Activated CD4-positive, alpha-beta memory T cell treated with anti-CD3 and anti-CD28 coated beads for 36 hours (primary cell): ENCODE measurements at regions of chr3 and their contacts with region 1.

Region 1: DNA sequence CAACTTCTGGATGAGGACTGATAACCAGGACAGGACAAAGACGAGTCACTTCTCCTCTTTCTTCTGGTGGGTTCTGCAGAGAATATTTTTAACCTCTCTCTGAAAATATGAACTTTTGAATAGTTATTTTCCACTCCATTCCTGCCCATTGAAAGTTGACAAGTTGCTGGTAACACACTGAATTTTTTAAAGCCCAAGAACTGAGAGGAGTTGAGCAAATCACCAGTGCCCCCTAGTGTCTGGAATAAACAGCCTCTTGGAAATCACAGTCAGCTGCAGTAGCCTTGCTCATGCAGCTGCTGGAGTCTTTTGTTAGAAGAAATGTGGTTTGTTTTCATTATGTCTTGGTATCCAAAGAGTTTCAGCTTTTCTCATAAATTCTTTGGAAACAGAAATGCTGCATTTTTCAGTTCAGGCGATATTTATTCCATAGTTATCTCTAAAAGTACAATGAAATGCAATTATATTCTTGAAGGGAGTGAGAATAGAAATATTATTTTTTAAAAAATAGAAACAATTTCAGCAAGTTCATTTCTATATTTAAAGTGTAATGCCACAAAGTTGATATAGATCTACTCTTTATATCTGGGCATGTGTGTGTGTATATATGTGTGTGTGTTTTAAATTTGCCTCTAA is 741.0 kb upstream of the CBLB start:
- DNase-seq: peak; percentile 76
- H3K4me3 Mint-ChIP-seq: no peak overlapping the region
- H3K27ac Mint-ChIP-seq: peak overlapping the region; percentile 67
- H3K4me1 Mint-ChIP-seq: peaks cover 23% of the 10 kb centered on the region
- H3K27me3 Mint-ChIP-seq: no peaks in the 10 kb centered on the region

Region 2: DNA sequence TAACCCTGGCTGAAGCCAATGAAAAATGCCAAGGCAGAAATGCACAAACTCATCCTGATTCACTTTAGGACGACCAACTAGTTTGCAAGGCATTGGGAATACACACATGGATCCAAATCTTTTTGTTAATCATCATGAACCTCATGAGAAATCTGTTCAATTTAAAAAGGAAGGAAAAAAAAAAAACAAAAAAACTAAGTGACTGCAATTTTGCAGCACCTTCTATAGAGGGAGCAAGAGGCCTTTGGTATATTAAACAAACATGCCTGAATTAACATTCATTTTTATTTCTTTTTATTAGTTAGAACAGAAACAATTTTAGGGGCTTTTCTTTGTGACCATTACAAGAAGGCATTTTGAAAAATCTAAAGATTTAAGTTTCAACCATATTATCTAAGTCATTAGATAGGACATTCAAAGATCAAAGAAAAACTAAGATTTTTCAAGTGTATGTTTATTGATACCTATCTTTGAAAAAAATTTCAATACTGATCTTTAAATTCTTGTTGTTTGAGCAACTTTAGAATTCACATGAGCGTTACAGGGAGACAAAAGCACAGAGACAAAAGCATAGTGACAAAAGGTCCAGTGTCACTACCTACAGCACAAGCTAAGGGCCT is 923.4 kb before region 1 on chr3:
- CTCF ChIA-PET with region 1: interaction called, 12 read pairs
- POLR2A ChIA-PET with region 1: no interaction called
- intact Hi-C with region 1: loop called (anchors 1 kb)
- DNase-seq: no peak
- H3K4me3 Mint-ChIP-seq: no peak overlapping the region
- H3K27ac Mint-ChIP-seq: peak overlapping the region; percentile 23
- H3K4me1 Mint-ChIP-seq: peaks cover 24% of the 10 kb centered on the region
- H3K27me3 Mint-ChIP-seq: no peaks in the 10 kb centered on the region

Region 3: DNA sequence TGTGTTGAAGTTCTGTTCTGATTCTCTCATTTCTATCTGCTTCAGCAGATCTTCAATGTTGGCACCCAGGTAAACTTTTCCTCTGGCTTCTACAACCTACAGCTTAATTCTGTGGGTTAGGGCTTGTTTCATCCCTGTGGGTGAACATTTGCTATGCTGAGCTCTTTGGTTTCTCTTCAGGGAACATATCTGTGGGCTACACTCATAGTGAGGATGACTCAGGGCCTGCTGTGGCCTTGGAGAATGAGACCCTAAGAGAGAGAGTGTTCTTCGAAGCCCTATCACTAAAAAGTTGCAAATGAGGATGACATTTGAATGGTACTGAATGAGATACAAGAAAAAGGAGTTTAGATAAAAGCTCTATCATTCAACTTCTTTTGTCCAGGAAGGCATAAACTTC is 394.7 kb before region 1 on chr3:
- CTCF ChIA-PET with region 1: interaction called, 3 read pairs
- POLR2A ChIA-PET with region 1: interaction called, 3 read pairs
- intact Hi-C with region 1: loop called (anchors 5 kb)
- DNase-seq: peak; percentile 64
- H3K4me3 Mint-ChIP-seq: no peak overlapping the region
- H3K27ac Mint-ChIP-seq: peak overlapping the region; percentile 68
- H3K4me1 Mint-ChIP-seq: peaks cover 61% of the 10 kb centered on the region
- H3K27me3 Mint-ChIP-seq: no peaks in the 10 kb centered on the region

Region 4: DNA sequence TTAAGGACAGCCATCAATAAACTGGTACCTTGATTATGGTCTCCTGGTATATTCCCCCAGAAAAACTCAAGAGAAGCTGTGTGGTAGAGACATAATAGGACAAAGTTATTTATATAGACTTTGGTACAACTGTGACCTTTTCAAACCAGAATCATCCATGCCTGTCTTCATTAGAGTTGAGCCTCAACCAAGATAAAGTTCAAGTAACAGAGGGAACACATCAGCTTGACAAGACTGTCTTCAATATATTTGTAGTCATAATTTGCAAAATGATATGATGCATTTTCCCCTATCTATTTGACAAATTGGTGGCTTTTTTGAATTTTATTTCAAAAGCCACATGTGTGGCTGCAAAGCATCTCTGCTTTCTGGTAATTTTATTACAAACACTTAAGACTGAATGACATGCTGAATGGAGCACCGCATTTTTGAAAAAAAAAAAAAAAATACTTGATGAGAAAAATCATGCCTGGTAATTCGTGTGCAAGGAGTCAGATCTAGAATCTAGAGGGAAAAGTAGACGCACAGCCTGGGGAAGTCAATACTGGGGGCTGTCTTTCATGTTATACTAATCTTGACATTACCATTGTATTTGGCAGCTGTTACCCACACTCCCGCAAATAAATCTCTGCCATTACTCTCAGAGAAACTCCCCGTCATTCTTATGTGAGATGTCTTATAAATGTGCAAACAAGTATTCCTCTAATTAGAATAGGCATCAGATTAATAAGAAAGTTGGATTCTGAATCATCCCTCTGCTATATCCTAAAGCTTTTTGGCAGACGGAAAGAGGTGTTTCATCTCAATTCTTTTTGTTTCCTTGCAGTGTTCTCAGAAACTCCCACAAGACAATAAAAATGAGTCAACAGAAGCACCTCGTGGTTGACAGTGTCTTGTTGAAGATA is 186.2 kb before region 1 on chr3:
- CTCF ChIA-PET with region 1: interaction called, 10 read pairs
- POLR2A ChIA-PET with region 1: interaction called, 4 read pairs
- intact Hi-C with region 1: loop called (anchors 2 kb)
- DNase-seq: peak; percentile 59
- H3K4me3 Mint-ChIP-seq: peak overlapping the region; percentile 18
- H3K27ac Mint-ChIP-seq: peak overlapping the region; percentile 94
- H3K4me1 Mint-ChIP-seq: peaks cover 54% of the 10 kb centered on the region
- H3K27me3 Mint-ChIP-seq: no peaks in the 10 kb centered on the region

Region 5: GRCh38 chr3:106473576-106474475 is 136.0 kb before region 1 on chr3:
- CTCF ChIA-PET with region 1: interaction called, 9 read pairs
- POLR2A ChIA-PET with region 1: no interaction called
- intact Hi-C with region 1: loop called (anchors 2 kb)
- DNase-seq: peak; percentile 53
- H3K4me3 Mint-ChIP-seq: no peak overlapping the region
- H3K27ac Mint-ChIP-seq: peak overlapping the region; percentile 71
- H3K4me1 Mint-ChIP-seq: peaks cover 19% of the 10 kb centered on the region
- H3K27me3 Mint-ChIP-seq: no peaks in the 10 kb centered on the region

Region 6: GRCh38 chr3:106534206-106534605 is 75.6 kb before region 1 on chr3:
- CTCF ChIA-PET with region 1: interaction called, 4 read pairs
- POLR2A ChIA-PET with region 1: no interaction called
- intact Hi-C with region 1: loop called (anchors 5 kb)
- DNase-seq: peak; percentile 81
- H3K4me3 Mint-ChIP-seq: peak overlapping the region; percentile 7
- H3K27ac Mint-ChIP-seq: peak overlapping the region; percentile 80
- H3K4me1 Mint-ChIP-seq: peaks cover 27% of the 10 kb centered on the region
- H3K27me3 Mint-ChIP-seq: no peaks in the 10 kb centered on the region

Region 7: DNA sequence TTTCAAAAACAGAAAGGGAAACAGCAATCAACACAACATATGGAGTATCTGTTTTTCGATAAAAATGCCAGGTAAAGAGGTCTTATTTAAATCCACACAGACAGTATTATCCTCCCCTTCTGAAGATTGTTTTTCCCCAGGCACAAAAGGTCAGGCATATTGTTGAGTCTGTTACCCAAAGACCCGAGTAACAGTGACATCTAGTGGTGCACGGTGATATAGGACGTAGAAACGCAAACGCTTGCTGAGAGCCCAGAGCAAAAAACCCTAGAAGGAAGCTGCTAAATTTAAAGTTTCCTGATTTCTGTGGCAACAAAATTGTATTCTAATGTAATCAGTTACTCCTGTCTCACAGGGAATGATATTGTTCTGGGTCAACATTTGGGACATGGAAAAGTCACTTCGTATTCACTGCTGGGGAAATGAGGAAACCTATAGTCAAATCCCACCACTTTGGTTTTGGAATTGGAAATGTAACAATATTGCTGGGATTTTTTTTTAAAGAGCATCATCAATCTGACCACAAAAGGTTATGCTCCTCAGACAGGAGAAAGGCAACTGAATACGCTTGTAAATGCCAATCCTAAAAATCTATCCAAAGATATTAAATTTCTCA is 454.8 kb after region 1 on chr3:
- CTCF ChIA-PET with region 1: interaction called, 3 read pairs
- POLR2A ChIA-PET with region 1: no interaction called
- intact Hi-C with region 1: loop called (anchors 10 kb)
- DNase-seq: peak; percentile 72
- H3K4me3 Mint-ChIP-seq: no peak overlapping the region
- H3K27ac Mint-ChIP-seq: no peak overlapping the region
- H3K4me1 Mint-ChIP-seq: peaks cover 18% of the 10 kb centered on the region
- H3K27me3 Mint-ChIP-seq: peaks cover 9% of the 10 kb centered on the region